ENCODE measurements at regions of chr11 and their contacts with region 1.

Region 1: GRCh38 chr11:12914400-12914912 is 94.7 kb upstream of the RASSF10 start:
- DNase-seq: peak; percentile 88
- ATAC-seq: peak; percentile 98
- H3K4me3 Mint-ChIP-seq: peak overlapping the region; percentile 55
- H3K27ac Mint-ChIP-seq: peak overlapping the region; percentile 99
- H3K4me1 Mint-ChIP-seq: peaks cover 59% of the 10 kb centered on the region
- H3K27me3 Mint-ChIP-seq: no peaks in the 10 kb centered on the region
- CTCF ChIP-seq: peak; percentile 62

Region 2: DNA sequence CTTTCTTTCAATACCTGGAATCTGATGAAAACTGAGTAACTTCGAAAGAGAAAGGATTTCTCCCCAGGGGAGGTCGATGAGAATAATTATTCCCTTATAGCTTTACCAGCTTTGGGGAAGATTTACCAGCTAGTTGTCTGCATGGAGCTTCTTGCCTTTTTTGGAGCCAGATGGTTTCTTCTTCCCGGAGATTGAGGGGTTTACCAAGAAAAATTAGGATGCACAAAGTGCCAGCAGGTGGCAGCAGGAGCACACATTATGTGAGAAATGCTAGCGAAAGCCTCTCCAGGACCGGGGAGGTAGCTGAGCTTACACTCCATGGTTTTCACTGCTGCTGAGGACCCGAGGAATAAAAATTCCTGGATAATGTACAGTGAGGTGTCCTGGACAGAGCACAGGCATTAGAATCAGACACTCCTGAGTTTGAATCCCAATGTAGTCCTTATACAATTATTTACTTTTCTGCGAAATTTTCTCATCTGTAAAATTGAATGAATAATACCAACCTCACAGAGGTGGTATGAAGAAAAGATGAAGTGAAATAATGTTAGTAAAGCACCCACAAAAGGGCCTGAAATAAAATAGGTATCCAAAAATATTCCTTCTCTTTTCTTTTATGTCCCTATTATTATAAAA is 583.1 kb before region 1 on chr11:
- CTCF ChIA-PET with region 1: interaction called, 24 read pairs
- POLR2A ChIA-PET with region 1: interaction called, 3 read pairs
- DNase-seq: peak; percentile 85
- ATAC-seq: peak; percentile 91
- H3K4me3 Mint-ChIP-seq: peak overlapping the region; percentile 22
- H3K27ac Mint-ChIP-seq: no peak overlapping the region
- H3K4me1 Mint-ChIP-seq: peaks cover 12% of the 10 kb centered on the region
- H3K27me3 Mint-ChIP-seq: no peaks in the 10 kb centered on the region; the same call in 1 of the 2 replicates
- CTCF ChIP-seq: peak; percentile 48

Region 3: GRCh38 chr11:12680246-12680939 is 234.1 kb before region 1 on chr11:
- CTCF ChIA-PET with region 1: interaction called, 13 read pairs
- POLR2A ChIA-PET with region 1: interaction called, 7 read pairs
- DNase-seq: peak; percentile 91
- ATAC-seq: peak; percentile 84
- H3K4me3 Mint-ChIP-seq: peak overlapping the region; percentile 70
- H3K27ac Mint-ChIP-seq: peak overlapping the region; percentile 99
- H3K4me1 Mint-ChIP-seq: peaks cover 95% of the 10 kb centered on the region
- H3K27me3 Mint-ChIP-seq: peaks cover 10% of the 10 kb centered on the region
- CTCF ChIP-seq: no peak

Region 4: DNA sequence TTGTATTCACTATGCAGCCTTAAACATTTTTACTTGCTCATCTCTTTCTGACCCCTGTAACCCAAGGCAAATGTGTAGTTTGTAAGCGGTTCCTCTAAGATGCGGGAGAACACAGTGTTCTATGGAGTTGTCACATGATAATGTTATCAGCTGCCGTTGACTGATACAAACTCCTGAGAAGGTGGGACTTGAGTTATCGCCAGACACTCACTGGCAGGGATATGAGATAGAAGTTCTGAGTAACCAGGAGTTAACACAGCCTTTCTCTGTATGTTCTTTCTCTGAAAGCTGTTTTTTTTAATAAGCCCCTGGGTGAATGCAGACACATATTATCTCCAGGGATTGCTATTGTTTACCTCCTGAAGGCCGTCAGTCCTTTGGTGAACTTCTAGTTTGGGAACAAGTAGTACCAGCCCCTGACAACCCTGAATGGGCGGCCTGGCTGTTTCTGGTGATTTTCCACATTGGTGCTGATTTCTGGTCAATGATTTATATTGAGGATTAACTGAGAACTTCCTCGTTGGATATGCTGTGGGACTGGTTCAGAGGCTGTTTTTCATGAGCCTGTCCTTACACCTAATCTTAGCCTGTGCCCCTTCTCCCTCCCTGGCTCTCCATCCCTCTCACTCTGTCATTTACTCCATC is 60.7 kb before region 1 on chr11:
- CTCF ChIA-PET with region 1: no interaction called
- POLR2A ChIA-PET with region 1: no interaction called
- DNase-seq: no peak
- ATAC-seq: no peak
- H3K4me3 Mint-ChIP-seq: no peak overlapping the region
- H3K27ac Mint-ChIP-seq: no peak overlapping the region
- H3K4me1 Mint-ChIP-seq: peaks cover 34% of the 10 kb centered on the region
- H3K27me3 Mint-ChIP-seq: no peaks in the 10 kb centered on the region
- CTCF ChIP-seq: no peak

Region 5: DNA sequence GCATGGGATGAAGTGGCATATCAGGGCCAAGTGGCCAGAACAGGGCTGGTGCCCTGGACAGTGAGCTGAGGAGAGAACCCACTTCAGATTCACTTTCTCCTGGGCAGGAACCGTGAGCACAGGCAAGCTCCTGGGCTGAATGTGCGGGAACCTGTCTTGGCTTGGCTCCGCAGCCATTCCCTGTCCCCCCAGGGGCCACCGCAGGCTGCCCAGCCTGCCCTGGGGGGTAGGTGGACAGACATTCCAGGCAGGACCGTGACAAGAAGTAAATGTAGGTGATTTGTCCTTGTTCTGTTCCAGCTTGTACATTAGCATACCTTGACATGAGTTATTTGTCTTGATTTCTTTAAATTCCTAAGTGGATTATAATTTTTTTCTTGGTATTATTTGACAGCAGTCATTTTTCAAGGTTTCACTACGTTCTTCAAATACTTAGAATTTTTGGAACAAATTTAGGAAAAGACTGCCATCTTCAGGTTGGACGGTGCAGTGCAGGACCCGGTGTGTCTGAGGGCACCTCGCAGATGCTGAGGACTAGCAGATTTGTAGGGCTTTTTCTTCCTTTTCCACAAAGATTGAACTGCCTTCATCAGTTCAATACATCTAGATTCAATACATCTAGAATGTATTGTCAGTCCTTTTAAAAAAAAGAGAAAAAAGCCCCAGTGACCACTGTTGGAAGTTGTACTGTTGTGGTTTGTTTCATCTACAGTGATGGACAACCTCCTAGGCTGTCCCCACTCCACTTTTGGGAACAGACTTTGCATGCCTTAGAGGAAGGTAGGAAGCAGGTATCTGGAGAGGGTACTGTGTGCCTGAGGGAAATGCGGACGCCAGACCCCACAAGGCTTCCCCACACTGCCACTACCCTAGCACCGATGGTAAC is 20.4 kb before region 1 on chr11:
- CTCF ChIA-PET with region 1: interaction called, 43 read pairs
- POLR2A ChIA-PET with region 1: interaction called, 3 read pairs
- DNase-seq: peak; percentile 84
- ATAC-seq: peak; percentile 61
- H3K4me3 Mint-ChIP-seq: no peak overlapping the region
- H3K27ac Mint-ChIP-seq: peak overlapping the region; percentile 30
- H3K4me1 Mint-ChIP-seq: peaks cover 27% of the 10 kb centered on the region
- H3K27me3 Mint-ChIP-seq: no peaks in the 10 kb centered on the region
- CTCF ChIP-seq: peak; percentile 80

Region 6: DNA sequence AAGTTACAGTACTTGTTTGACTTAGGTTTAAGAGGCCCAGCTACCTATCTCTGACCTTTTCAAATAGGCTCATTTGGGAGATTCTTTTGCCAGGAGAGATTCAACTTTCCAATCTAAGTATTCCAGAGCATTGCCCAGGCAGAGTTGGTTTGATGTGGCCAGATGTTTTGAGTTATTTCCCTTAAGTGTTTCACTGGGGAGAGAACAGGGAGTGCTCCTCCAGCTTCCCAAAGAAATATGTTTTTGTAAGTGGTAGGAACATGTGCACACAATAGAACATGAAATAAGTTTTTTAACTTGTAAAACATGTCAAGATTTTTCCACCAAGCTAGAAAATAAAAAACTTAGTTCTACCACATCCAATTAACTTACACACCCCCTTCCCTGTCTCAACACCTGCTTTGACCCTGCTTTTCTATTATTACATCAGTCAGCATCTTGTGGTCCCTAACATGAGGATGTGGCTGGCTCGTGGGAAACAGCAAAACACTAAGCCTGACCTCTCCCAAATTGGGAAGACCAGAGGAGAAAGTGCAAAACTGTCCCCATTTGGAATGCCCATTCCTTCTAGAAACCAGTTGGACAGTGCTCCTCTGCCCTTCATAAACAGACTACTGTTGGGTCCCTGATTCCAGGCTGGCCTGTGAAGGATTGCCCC is 24.3 kb after region 1 on chr11:
- CTCF ChIA-PET with region 1: interaction called, 16 read pairs
- POLR2A ChIA-PET with region 1: no interaction called
- DNase-seq: no peak
- ATAC-seq: no peak
- H3K4me3 Mint-ChIP-seq: no peak overlapping the region
- H3K27ac Mint-ChIP-seq: no peak overlapping the region
- H3K4me1 Mint-ChIP-seq: no peaks in the 10 kb centered on the region
- H3K27me3 Mint-ChIP-seq: no peaks in the 10 kb centered on the region
- CTCF ChIP-seq: no peak

Region 7: DNA sequence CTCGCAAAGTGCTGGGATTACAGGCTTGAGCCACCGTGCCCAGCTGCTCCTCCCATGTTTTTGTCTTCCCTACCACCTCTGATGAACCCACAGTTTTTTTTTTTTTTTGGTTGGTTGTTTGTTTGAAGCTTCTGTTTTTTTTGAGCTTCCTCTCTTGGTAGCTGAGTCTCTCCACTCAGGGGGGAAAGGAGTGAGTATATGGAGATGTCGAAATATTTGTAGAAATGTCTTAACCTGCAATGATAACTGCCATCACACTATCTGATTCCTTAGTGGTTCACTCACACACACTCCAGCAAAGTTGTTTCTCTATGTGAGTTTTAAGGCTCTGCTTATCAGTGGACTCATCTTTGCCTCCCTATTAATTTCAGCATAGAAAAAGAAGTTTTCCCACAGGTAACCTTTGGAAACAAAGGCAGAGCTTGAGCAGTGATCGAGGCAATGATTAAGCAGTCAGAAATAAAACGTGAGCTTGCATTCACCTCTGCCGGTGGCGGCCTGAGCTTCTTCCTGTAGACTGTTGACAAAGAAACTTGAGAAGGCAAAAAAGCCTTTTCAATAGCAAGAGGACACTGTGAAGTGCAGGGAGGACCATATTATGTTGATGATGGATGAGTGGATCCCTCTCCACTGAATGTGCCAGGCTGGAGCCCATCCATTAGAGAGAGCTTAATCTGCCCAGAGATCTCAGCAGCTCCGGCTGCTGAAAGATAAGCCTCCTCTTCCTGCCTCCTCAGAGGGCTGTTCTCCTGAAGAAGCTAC is 65.7 kb after region 1 on chr11:
- CTCF ChIA-PET with region 1: interaction called, 16 read pairs
- POLR2A ChIA-PET with region 1: no interaction called
- DNase-seq: no peak
- ATAC-seq: no peak; the same call in 1 of the 2 replicates
- H3K4me3 Mint-ChIP-seq: no peak overlapping the region
- H3K27ac Mint-ChIP-seq: no peak overlapping the region
- H3K4me1 Mint-ChIP-seq: peaks cover 9% of the 10 kb centered on the region
- H3K27me3 Mint-ChIP-seq: no peaks in the 10 kb centered on the region
- CTCF ChIP-seq: no peak

Measured in WTC11 (cell line).